Activated CD4-positive, alpha-beta T cell treated with anti-CD3 and anti-CD28 coated beads, Interleukin-2, amount 10 ng/mL, durations not matched to agents 24 days and 14 days (primary cell): ENCODE measurements at regions of chr7 and their contacts with region 1.

Region 1: GRCh38 chr7:4753711-4754432 is 21.6 kb upstream of the AP5Z1 start:
- DNase-seq: peak; percentile 96
- H3K4me3 Mint-ChIP-seq: no peak overlapping the region
- H3K27ac Mint-ChIP-seq: no peak overlapping the region
- H3K4me1 Mint-ChIP-seq: peaks cover 11% of the 10 kb centered on the region
- H3K27me3 Mint-ChIP-seq: no peaks in the 10 kb centered on the region

Region 2: GRCh38 chr7:4325732-4326131 is 428.1 kb before region 1 on chr7:
- intact Hi-C with region 1: no loop called
- DNase-seq: no peak
- H3K4me3 Mint-ChIP-seq: no peak overlapping the region
- H3K27ac Mint-ChIP-seq: no peak overlapping the region
- H3K4me1 Mint-ChIP-seq: no peaks in the 10 kb centered on the region
- H3K27me3 Mint-ChIP-seq: no peaks in the 10 kb centered on the region

Region 3: DNA sequence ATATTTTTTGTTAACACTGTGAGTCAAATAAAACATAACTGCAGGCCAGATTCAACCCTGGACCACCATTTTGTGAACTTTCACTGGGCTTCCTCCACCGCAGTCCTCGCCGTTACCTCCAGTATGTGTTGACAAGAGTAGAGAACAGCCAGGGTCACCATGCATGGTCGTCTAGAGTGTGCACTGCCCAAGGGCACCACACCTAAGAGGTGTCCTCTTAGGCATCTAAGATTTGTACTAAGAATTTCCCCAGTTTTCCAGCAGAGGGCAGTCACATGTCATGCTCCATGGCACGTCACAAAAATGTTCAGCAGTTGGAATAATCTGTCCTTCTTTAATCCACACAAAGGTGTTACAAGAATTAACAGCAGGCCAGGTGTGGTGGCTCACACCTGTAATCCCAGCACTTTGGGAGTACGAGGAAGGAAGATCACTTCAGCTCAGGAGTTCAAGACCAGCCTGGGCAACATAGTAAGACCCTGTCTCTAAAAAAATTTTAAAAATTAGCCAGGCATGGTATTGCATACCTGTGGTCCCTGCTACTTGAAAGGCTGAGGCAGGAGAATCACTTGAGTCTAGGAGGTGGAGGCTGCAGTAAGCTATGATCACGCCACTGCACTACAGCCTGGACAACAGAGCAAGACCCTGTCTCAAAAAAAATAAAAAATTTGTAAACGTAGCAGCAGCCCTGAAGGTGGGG is 143.0 kb before region 1 on chr7:
- intact Hi-C with region 1: loop called (anchors 1 kb)
- DNase-seq: peak; percentile 89
- H3K4me3 Mint-ChIP-seq: no peak overlapping the region
- H3K27ac Mint-ChIP-seq: no peak overlapping the region
- H3K4me1 Mint-ChIP-seq: peaks cover 10% of the 10 kb centered on the region
- H3K27me3 Mint-ChIP-seq: no peaks in the 10 kb centered on the region